Activated CD4-positive, alpha-beta memory T cell treated with anti-CD3 and anti-CD28 coated beads for 36 hours (primary cell): ENCODE measurements at regions of chrX and their contacts with region 1.

Region 1: GRCh38 chrX:81201671-81202455 is at the starts of genes HMGN5 and SH3BGRL:
- DNase-seq: peak; percentile 78
- H3K4me3 Mint-ChIP-seq: peak within 1 kb of the TSS; percentile 95
- H3K27ac Mint-ChIP-seq: peak within 1 kb of the TSS; percentile 92
- H3K4me1 Mint-ChIP-seq: peaks cover 28% of the 10 kb centered on the region
- H3K27me3 Mint-ChIP-seq: no peaks in the 10 kb centered on the region
- total RNA-seq, gene HMGN5: 5.4 to 6.1 TPM
- total RNA-seq, gene SH3BGRL: 39.1 to 41.9 TPM

Region 2: DNA sequence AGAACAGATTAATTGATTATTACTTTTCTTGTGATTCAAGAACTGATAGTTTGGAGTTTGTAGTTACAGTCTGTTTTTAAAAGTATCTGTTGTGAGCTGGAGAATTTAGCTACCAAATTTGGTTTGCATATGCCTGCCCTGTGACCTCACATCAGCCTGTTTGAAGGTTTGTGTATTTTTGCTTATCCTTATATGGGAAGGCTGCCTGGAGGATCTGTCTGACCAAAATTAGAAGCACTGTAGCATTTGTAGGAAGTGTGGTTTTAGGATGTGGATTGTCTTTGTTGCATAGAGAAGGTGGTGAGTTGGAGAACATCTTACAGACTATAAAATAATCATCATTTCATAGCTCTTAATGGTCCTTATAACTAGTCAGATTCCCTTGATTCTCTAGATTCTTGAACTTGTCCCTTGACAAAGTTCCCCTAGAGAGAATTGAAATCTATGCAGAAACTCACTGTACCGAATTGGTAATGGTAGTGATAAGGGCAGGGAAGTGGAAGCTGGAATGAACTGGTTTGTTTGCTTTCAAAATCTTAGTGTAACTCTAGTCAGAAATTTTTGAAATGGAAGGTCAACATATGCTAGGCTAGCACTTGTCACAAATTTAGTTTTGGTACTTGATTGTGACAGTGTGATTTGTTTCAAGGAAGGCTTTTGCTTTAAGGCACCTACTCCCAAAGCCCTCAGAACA is 57.3 kb after region 1 on chrX:
- CTCF ChIA-PET with region 1: no interaction called
- POLR2A ChIA-PET with region 1: no interaction called
- intact Hi-C with region 1: loop called (anchors 2 kb)
- DNase-seq: no peak
- H3K4me3 Mint-ChIP-seq: no peak overlapping the region
- H3K27ac Mint-ChIP-seq: no peak overlapping the region
- H3K4me1 Mint-ChIP-seq: peaks cover 17% of the 10 kb centered on the region
- H3K27me3 Mint-ChIP-seq: no peaks in the 10 kb centered on the region